T-cell (primary cell): ENCODE measurements at regions of chr7 and their contacts with region 1.

Region 1: GRCh38 chr7:38129162-38129561 is 48.9 kb upstream of the STARD3NL start:
- DNase-seq: no peak
- ATAC-seq: no peak
- H3K4me3 ChIP-seq: no peak overlapping the region
- H3K4me3 Mint-ChIP-seq: no peak overlapping the region
- H3K27ac ChIP-seq: no peak overlapping the region
- H3K27ac Mint-ChIP-seq: no peak overlapping the region
- H3K4me1 ChIP-seq: no peaks in the 10 kb centered on the region
- H3K4me1 Mint-ChIP-seq: no peaks in the 10 kb centered on the region
- H3K27me3 ChIP-seq: peaks cover 0 to 7% of the 10 kb centered on the region in 2 experiments
- H3K27me3 Mint-ChIP-seq: peaks cover 30 to 33% of the 10 kb centered on the region in 2 donors

Region 2: DNA sequence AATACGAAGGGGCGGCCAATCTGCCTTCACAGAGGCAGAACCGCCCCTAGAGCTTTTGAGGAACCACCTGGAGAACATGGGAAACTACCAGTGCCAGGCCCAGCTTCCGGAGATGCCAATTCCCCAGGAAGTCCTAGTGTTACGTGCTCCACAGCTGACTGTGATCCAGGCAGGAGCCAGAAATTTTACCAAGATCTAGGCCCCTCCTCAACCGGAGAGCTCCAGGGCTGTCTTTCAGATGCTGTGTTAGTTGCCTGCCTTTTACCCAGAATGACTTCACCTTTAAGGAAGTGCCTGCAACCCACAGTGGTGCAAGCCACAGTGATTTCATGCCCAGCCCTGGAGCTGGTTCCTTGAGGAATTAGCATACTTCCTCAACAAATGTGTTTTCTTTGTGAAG is 743.4 kb before region 1 on chr7:
- CTCF ChIA-PET with region 1: no interaction called
- POLR2A ChIA-PET with region 1: no interaction called
- DNase-seq: no peak
- ATAC-seq: no peak
- H3K4me3 ChIP-seq: no peak overlapping the region
- H3K4me3 Mint-ChIP-seq: no peak overlapping the region
- H3K27ac ChIP-seq: no peak overlapping the region
- H3K27ac Mint-ChIP-seq: no peak overlapping the region
- H3K4me1 ChIP-seq: peaks cover 2 to 4% of the 10 kb centered on the region in 2 experiments
- H3K4me1 Mint-ChIP-seq: peaks cover 30 to 56% (median 46%) of the 10 kb centered on the region in 3 donors
- H3K27me3 ChIP-seq: no peaks in the 10 kb centered on the region
- H3K27me3 Mint-ChIP-seq: no peaks in the 10 kb centered on the region

Region 3: DNA sequence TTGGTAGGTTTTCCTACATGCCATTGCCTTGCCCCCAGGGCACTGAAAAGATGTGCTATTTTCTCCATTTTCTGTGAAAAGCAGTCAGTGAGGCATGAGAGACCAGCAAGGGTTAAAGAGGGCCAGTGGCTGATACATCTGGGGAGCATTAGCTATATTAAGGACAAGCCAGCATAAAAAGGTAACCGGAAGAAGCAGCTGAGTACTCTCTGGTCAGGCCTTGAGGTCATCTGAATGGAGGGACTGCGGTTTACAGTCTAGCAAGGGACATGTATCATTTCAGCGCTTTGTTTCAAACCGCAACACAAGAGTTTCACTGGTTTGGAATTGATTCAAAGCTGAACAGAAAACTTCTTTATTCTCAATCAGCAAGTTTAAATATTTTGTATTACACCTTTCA is 88.3 kb before region 1 on chr7:
- CTCF ChIA-PET with region 1: no interaction called
- POLR2A ChIA-PET with region 1: no interaction called
- DNase-seq: no peak
- ATAC-seq: no peak
- H3K4me3 ChIP-seq: no peak overlapping the region
- H3K4me3 Mint-ChIP-seq: no peak overlapping the region
- H3K27ac ChIP-seq: no peak overlapping the region
- H3K27ac Mint-ChIP-seq: no peak overlapping the region
- H3K4me1 ChIP-seq: no peaks in the 10 kb centered on the region
- H3K4me1 Mint-ChIP-seq: no peaks in the 10 kb centered on the region
- H3K27me3 ChIP-seq: no peaks in the 10 kb centered on the region
- H3K27me3 Mint-ChIP-seq: peaks cover 5 to 7% of the 10 kb centered on the region in 2 donors

Region 4: DNA sequence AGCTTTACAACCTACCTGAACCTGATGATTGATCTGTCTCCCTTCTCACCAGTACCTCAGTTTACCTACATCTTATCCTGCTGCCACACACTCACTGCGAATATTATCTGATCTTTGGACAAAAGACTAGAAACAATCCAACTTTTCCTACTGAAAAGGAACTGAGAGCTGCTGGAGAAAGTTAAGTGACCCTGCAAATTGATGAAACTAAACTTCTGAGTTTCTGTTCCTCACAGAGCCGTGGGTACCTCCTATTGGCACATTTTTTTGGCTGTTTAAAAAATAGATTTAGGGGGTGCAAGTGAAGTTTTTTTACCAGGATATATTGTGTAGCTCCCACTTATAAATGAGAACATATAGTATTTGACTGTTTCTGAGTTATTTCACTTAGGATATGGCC is 17.1 kb before region 1 on chr7:
- CTCF ChIA-PET with region 1: no interaction called
- POLR2A ChIA-PET with region 1: no interaction called
- DNase-seq: no peak
- ATAC-seq: no peak
- H3K4me3 ChIP-seq: no peak overlapping the region
- H3K4me3 Mint-ChIP-seq: no peak overlapping the region
- H3K27ac ChIP-seq: no peak overlapping the region
- H3K27ac Mint-ChIP-seq: no peak overlapping the region
- H3K4me1 ChIP-seq: no peaks in the 10 kb centered on the region
- H3K4me1 Mint-ChIP-seq: no peaks in the 10 kb centered on the region
- H3K27me3 ChIP-seq: peaks cover 0 to 4% of the 10 kb centered on the region in 2 experiments
- H3K27me3 Mint-ChIP-seq: peaks cover 18 to 20% of the 10 kb centered on the region in 2 donors

Region 5: DNA sequence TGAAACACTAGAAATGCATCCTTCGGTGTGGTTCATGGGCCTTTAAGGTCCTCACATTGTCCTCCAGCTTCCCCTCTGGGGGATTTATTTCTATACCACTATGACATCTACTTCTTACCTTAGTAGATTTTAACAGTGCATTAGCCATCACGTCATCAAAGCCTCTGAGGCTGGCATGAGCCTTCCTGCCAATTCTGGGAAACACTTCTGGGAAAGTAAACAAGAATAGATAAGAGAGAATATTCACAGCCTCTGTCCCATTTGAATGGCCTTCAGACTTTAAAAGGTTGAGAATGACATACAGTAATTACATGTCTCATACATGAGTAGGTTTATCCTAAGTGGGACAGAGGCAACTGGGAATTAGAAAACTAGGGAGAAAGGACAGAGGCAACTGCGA is 412.3 kb after region 1 on chr7:
- CTCF ChIA-PET with region 1: interaction called in 1 of 2 experiments, 10 read pairs
- POLR2A ChIA-PET with region 1: no interaction called
- DNase-seq: no peak
- ATAC-seq: no peak
- H3K4me3 ChIP-seq: no peak overlapping the region
- H3K4me3 Mint-ChIP-seq: no peak overlapping the region
- H3K27ac ChIP-seq: no peak overlapping the region
- H3K27ac Mint-ChIP-seq: no peak overlapping the region
- H3K4me1 ChIP-seq: no peaks in the 10 kb centered on the region
- H3K4me1 Mint-ChIP-seq: no peaks in the 10 kb centered on the region
- H3K27me3 ChIP-seq: no peaks in the 10 kb centered on the region
- H3K27me3 Mint-ChIP-seq: peaks cover 0 to 7% of the 10 kb centered on the region in 2 donors